Activated T-helper 1 cell treated with anti-CD3 and anti-CD28 coated beads, Interleukin-12 subunit alpha, Interleukin-12 subunit beta, Interleukin-2, Interleukin-4 antibody, amounts not matched to agents 30 ng/mL and 10 ng/mL and 1 ng/mL, durations not matched to agents 14 hours and 24 hours and 36 hours (primary cell): ENCODE measurements at regions of chr20 and their contacts with region 1.

Region 1: DNA sequence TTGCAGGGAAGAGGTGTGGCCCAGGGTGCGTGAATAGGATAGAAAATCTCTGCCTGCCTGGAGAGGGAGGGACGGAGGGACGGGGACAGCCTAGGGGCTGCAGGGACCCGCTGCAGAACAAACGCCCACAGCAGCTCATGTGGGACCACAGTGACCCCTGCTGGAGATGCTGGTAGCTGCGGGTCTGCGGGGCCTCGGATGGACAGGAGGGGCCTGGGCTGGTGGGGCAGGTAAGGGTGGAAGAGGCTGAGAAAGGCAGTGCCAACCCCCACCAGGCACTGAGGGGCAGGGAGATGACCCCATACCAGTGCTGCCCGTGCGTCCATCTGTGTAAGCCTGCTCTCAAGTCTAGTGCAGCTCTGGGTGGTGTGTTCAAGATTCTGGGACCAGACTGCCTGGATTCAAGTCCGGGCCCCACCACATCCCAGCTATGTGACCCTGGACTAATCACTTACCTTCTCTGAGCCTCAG is 39.4 kb downstream of the KIAA1755 start:
- DNase-seq: peak; percentile 60
- H3K4me3 Mint-ChIP-seq: no peak overlapping the region
- H3K27ac Mint-ChIP-seq: no peak overlapping the region
- H3K4me1 Mint-ChIP-seq: no peaks in the 10 kb centered on the region
- H3K27me3 Mint-ChIP-seq: peaks cover 9% of the 10 kb centered on the region

Region 2: GRCh38 chr20:37564388-37565133 is 656.6 kb before region 1 on chr20:
- intact Hi-C with region 1: loop called (anchors 1 kb)
- DNase-seq: peak; percentile 20
- H3K4me3 Mint-ChIP-seq: no peak overlapping the region
- H3K27ac Mint-ChIP-seq: no peak overlapping the region
- H3K4me1 Mint-ChIP-seq: no peaks in the 10 kb centered on the region
- H3K27me3 Mint-ChIP-seq: peaks cover 32% of the 10 kb centered on the region

Region 3: GRCh38 chr20:38057351-38057972 is 163.7 kb before region 1 on chr20:
- intact Hi-C with region 1: loop called (anchors 1 kb)
- DNase-seq: peak; percentile 56
- H3K4me3 Mint-ChIP-seq: no peak overlapping the region
- H3K27ac Mint-ChIP-seq: peak overlapping the region; percentile 59
- H3K4me1 Mint-ChIP-seq: peaks cover 30% of the 10 kb centered on the region
- H3K27me3 Mint-ChIP-seq: no peaks in the 10 kb centered on the region

Region 4: DNA sequence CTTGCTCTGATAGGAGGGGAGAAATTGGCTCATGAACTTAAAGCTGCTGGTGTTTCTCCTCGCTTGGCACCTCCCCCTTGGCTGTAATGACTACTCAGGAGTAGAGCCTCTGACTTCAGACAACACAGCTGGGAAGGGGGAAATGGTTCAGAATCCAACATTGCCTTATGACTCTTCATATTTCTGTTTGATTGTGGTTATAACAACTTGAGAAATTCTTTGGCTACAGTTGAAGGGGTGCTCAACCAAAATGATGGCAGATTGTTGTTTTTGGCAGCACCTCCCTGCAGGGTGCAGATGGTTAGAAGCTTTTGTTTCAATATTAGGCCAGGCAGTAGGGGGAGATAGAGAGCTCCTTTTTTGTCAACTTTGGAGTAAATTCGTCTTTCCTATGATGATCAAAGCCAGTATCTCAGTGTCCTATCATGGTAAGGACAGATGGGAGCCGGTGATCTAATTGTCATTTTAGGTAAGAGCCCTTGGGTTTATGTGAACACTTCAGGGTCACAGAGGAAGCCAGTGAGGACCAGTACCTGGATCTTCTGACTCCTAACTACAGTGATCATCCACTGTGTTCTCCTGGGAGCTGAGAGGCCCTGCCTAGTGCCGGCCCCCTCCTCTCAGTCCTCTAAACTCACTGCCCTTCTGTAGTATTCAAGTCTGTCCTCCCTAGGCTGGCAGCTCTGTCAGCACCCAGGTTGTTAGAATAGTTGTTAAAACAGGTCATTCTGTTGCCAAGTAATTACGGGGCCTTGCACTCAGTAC is 147.7 kb before region 1 on chr20:
- intact Hi-C with region 1: loop called (anchors 1 kb)
- DNase-seq: peak; percentile 31
- H3K4me3 Mint-ChIP-seq: no peak overlapping the region
- H3K27ac Mint-ChIP-seq: peak overlapping the region; percentile 49
- H3K4me1 Mint-ChIP-seq: peaks cover 7% of the 10 kb centered on the region
- H3K27me3 Mint-ChIP-seq: no peaks in the 10 kb centered on the region

Region 5: DNA sequence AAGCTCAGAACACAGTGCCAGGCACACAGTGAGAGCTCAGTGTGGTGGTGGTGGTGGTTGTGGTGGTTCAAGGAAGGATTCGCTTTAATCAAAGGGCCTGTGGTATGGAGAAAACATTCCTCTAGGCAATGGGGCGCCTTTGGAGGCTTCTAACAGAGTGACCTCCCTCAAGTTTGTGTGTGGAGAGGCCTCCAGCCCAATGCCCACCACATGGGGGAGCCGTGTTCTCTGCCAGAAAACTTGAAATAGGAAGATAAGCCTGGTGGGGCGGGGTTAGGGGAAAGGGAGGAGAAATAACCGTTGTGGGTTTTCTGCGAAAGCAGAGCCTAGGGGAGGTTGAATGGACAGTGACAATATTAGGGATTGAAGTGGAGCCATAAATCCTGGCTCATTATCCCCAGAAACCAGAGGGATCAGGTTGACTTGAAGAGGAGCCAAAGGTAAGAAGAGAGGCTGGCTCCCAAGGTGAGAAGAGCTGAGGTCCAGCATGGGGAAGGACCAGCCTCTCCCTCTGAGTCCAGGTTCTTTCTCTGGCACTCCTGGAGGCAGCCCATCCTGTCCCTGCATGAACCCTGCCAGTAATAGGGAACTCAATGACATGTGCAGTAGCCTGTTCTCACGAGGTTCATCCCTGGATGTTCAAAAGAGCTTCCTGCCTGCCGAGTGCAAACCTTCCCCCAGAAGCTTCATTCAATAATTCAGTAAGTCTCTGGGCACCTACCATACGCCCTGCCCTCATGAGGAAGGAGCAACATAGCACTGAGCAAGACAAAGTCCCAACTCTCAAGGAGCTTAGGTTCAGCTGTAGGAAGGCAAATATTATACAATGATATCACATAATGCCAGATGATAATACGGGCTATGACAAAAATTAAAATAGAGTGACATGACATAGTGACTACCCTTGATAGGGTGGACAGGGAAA is 107.5 kb before region 1 on chr20:
- intact Hi-C with region 1: loop called (anchors 1 kb)
- DNase-seq: no peak
- H3K4me3 Mint-ChIP-seq: no peak overlapping the region
- H3K27ac Mint-ChIP-seq: no peak overlapping the region
- H3K4me1 Mint-ChIP-seq: peaks cover 11% of the 10 kb centered on the region
- H3K27me3 Mint-ChIP-seq: peaks cover 6% of the 10 kb centered on the region

Region 6: GRCh38 chr20:38246357-38247165 is 25.4 kb after region 1 on chr20:
- intact Hi-C with region 1: no loop called
- DNase-seq: no peak
- H3K4me3 Mint-ChIP-seq: no peak overlapping the region
- H3K27ac Mint-ChIP-seq: no peak overlapping the region
- H3K4me1 Mint-ChIP-seq: no peaks in the 10 kb centered on the region
- H3K27me3 Mint-ChIP-seq: no peaks in the 10 kb centered on the region

Region 7: DNA sequence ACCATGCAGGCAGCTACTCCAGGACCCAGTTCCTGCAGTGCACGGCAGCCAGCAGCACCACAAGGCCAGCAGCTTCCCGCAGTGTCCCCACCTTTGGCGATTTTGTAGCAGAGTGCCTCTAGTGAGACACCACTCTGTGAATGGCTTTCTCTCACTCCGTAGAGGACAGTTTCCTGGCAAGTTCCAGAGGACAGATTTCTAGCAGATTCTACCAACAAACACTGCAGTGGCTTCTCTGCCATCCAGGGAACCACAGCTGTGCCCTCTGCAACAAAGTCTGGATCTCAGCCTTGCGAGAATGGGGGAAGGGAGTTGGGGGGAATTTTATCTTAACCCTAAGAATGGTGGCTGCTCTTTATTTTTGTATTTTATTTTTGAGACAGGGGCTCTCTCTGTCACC is 185.3 kb after region 1 on chr20:
- intact Hi-C with region 1: loop called (anchors 5 kb)
- DNase-seq: no peak
- H3K4me3 Mint-ChIP-seq: no peak overlapping the region
- H3K27ac Mint-ChIP-seq: no peak overlapping the region
- H3K4me1 Mint-ChIP-seq: no peaks in the 10 kb centered on the region
- H3K27me3 Mint-ChIP-seq: no peaks in the 10 kb centered on the region